ENCODE measurements at regions of chr9 and their contacts with region 1.

Region 1: GRCh38 chr9:103397868-103398600 is 402.9 kb downstream of the CYLC2 start:
- DNase-seq: peak; percentile 34 to 62 (median 51)
- H3K4me3 ChIP-seq: no peak overlapping the region
- H3K27ac ChIP-seq: no peak overlapping the region
- H3K4me1 ChIP-seq: no peaks in the 10 kb centered on the region
- H3K27me3 ChIP-seq: no peaks in the 10 kb centered on the region

Region 2: DNA sequence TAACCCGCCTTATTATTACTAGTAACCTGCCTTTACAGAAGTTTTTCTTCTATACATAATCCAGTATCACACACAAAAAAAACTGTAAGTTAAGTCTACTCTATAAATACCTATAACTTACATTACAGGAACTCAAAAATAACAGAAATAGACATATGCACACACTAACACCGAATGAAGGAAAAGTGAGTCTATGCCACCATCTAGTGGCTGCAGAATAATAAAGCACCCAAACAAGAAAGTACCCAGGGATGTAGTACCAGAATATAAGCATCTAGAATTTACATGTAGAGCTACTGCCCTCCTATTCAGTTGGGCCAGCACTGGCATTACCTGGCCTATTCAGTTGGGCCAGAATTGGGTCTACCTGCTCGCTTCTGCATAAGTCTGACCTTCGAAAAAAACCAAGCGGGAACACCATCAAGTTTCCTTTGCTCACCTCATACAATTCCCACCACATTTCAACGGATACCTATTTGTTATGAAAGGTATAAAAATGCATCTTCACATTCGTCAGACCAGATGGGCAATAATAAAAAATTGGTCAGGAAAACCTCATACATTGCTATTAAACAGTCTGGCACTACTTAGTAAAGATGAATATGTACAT is 1345.4 kb after region 1 on chr9:
- CTCF ChIA-PET with region 1: interaction called, 11 read pairs
- POLR2A ChIA-PET with region 1: no interaction called
- DNase-seq: peak; percentile 80 to 92 (median 89)
- H3K4me3 ChIP-seq: no peak overlapping the region
- H3K27ac ChIP-seq: no peak overlapping the region
- H3K4me1 ChIP-seq: peaks cover 12 to 27% (median 18%) of the 10 kb centered on the region in 4 experiments
- H3K27me3 ChIP-seq: no peaks in the 10 kb centered on the region

Measured in common myeloid progenitor, CD34-positive (primary cell).